ENCODE measurements at regions of chr1 and their contacts with region 1.

Region 1: DNA sequence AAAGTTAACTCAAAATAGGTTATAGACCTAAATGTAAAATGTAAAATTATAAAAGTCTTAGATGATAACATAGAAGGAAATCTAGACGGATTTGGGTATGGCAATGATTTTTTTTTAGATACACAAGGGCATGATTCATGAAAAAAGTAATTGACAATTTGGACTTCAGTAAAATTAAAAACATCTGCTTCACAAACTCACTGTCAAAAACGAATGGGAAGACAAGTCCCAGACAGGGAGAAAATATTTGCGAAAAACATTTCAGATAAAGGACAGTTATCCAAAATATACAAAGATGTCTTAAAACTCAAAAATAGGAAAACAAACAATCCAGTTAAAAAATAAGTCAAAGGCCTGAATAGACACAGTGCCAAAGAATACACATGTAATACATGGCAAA is 9.7 kb upstream of the PTGS2 start:
- DNase-seq: no peak
- H3K4me3 ChIP-seq: no peak overlapping the region
- H3K27ac ChIP-seq: no peak overlapping the region
- H3K4me1 ChIP-seq: no peaks in the 10 kb centered on the region
- H3K27me3 ChIP-seq: no peaks in the 10 kb centered on the region
- CTCF ChIP-seq: no peak
- POLR2A ChIP-seq: no peak

Region 2: DNA sequence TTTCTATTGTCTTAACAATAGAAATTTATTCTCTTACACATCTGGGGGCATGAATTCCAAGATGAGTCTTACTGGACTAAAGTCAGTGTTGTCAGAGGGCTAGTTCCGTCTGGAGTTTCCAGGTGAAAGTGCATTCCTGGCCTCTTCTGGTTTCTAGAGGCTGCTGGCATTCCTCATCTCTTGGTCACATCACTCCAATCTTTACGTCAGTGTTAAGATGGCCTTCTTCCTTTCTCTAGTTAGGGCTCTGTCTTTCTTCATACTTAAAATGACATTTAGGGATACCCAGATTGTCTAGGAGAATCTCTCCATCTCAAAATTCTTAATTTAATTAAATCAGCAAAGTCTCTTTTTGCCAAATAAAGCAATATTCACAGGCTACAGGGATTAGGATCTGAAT is 215.7 kb before region 1 on chr1:
- intact Hi-C with region 1: loop called (anchors 10 kb)
- DNase-seq: no peak
- H3K4me3 ChIP-seq: no peak overlapping the region
- H3K27ac ChIP-seq: no peak overlapping the region
- H3K4me1 ChIP-seq: no peaks in the 10 kb centered on the region
- H3K27me3 ChIP-seq: no peaks in the 10 kb centered on the region
- CTCF ChIP-seq: no peak
- POLR2A ChIP-seq: no peak

Region 3: DNA sequence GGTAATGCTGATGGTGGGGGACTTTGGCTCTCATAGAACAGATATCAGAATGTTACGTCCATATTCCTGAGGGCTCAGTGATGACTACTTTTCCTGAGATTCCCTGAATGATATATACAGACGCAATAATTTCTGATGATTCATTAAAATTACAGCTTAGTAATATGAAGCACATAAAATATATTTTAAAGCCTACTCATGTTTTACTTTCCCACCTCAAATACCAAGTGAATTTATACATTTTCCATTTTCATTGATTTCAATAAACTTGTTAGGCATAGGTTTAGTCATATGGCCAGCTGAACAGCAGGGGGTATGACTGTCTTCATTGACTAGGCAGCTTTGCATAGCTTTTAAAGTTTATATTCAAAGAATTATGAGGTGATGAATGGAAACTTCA is 202.7 kb before region 1 on chr1:
- intact Hi-C with region 1: no loop called
- DNase-seq: no peak
- H3K4me3 ChIP-seq: no peak overlapping the region
- H3K27ac ChIP-seq: no peak overlapping the region
- H3K4me1 ChIP-seq: peaks cover 0 to 8% (median 0%) of the 10 kb centered on the region in 3 donors
- H3K27me3 ChIP-seq: no peaks in the 10 kb centered on the region
- CTCF ChIP-seq: no peak
- POLR2A ChIP-seq: no peak

Measured in esophagus squamous epithelium (tissue), 5 donors.